ENCODE measurements at regions of chr20 and their contacts with region 1.

Region 1: GRCh38 chr20:57596998-57597939 is 23.0 kb downstream of the ZBP1 start:
- DNase-seq: peak; percentile 84
- ATAC-seq: peak; percentile 70
- H3K4me3 Mint-ChIP-seq: no peak overlapping the region
- H3K27ac Mint-ChIP-seq: no peak overlapping the region
- H3K4me1 Mint-ChIP-seq: peaks cover 2% of the 10 kb centered on the region
- H3K27me3 Mint-ChIP-seq: peaks cover 3% of the 10 kb centered on the region

Region 2: GRCh38 chr20:57089691-57090150 is 507.5 kb before region 1 on chr20:
- CTCF ChIA-PET with region 1: no interaction called
- POLR2A ChIA-PET with region 1: no interaction called
- intact Hi-C with region 1: loop called in 1 of 2 experiments (anchors 2 kb)
- DNase-seq: peak; percentile 87
- ATAC-seq: peak; percentile 80
- H3K4me3 Mint-ChIP-seq: no peak overlapping the region
- H3K27ac Mint-ChIP-seq: no peak overlapping the region
- H3K4me1 Mint-ChIP-seq: peaks cover 15% of the 10 kb centered on the region
- H3K27me3 Mint-ChIP-seq: peaks cover 9% of the 10 kb centered on the region

Region 3: GRCh38 chr20:57498425-57499400 is 98.6 kb before region 1 on chr20:
- CTCF ChIA-PET with region 1: interaction called, 7 read pairs
- POLR2A ChIA-PET with region 1: no interaction called
- intact Hi-C with region 1: loop called (anchors 1 to 2 kb)
- DNase-seq: peak; percentile 75
- ATAC-seq: peak; percentile 95
- H3K4me3 Mint-ChIP-seq: no peak overlapping the region
- H3K27ac Mint-ChIP-seq: no peak overlapping the region
- H3K4me1 Mint-ChIP-seq: peaks cover 12% of the 10 kb centered on the region
- H3K27me3 Mint-ChIP-seq: peaks cover 31% of the 10 kb centered on the region

Region 4: DNA sequence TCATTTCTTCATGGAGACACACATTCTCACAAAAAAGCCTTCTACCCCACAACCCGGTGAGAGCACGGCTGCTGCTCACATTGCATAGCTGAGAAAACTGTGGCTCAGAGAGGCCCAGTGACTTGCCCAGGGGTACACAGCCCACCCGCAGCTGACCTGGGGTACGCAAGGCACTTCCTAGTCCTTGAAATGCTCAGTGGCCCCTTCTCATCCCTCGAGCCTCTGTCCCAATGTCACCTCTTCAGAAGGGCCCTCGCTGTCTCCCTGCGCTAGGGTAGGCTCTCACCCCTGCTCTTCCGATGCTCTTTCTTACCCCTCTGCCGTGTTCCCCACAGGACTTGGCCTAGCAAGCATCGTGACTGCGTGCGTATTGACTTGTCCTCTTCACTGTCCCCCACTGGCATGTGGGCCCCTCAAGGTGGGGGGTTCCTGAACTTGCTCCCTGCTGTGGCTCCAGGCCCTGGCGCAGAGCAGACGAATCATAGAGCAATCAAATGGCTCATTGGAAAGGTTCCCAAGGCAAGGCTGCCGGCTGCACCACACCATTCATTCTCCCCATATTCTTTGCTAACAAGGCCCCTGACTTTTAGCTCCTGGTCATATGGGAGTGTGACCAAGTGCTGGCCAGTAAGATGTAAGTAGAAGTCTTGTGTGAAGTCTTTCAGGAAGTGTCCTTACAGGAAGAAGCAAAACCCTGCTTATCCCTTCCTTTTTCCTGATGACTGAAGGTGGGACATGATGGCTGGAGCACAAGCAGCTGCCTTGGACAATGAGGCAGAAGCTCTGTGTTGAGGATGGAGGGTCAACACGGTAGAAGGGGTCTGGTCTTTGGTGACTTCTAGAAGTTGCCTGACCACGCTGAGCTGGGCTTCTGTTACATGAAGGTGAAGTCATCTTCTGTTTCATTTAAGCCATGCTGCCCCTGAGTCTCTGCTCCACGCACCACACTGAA is 13.7 kb before region 1 on chr20:
- CTCF ChIA-PET with region 1: interaction called, 14 read pairs
- POLR2A ChIA-PET with region 1: no interaction called
- intact Hi-C with region 1: no loop called
- DNase-seq: no peak
- ATAC-seq: no peak
- H3K4me3 Mint-ChIP-seq: no peak overlapping the region
- H3K27ac Mint-ChIP-seq: no peak overlapping the region
- H3K4me1 Mint-ChIP-seq: no peaks in the 10 kb centered on the region
- H3K27me3 Mint-ChIP-seq: peaks cover 49% of the 10 kb centered on the region

Region 5: GRCh38 chr20:57654363-57654997 is 57.2 kb after region 1 on chr20:
- CTCF ChIA-PET with region 1: interaction called, 9 read pairs
- POLR2A ChIA-PET with region 1: no interaction called
- intact Hi-C with region 1: loop called (anchors 1 kb)
- DNase-seq: peak; percentile 75
- ATAC-seq: peak; percentile 81
- H3K4me3 Mint-ChIP-seq: no peak overlapping the region
- H3K27ac Mint-ChIP-seq: no peak overlapping the region
- H3K4me1 Mint-ChIP-seq: peaks cover 20% of the 10 kb centered on the region
- H3K27me3 Mint-ChIP-seq: no peaks in the 10 kb centered on the region

Region 6: DNA sequence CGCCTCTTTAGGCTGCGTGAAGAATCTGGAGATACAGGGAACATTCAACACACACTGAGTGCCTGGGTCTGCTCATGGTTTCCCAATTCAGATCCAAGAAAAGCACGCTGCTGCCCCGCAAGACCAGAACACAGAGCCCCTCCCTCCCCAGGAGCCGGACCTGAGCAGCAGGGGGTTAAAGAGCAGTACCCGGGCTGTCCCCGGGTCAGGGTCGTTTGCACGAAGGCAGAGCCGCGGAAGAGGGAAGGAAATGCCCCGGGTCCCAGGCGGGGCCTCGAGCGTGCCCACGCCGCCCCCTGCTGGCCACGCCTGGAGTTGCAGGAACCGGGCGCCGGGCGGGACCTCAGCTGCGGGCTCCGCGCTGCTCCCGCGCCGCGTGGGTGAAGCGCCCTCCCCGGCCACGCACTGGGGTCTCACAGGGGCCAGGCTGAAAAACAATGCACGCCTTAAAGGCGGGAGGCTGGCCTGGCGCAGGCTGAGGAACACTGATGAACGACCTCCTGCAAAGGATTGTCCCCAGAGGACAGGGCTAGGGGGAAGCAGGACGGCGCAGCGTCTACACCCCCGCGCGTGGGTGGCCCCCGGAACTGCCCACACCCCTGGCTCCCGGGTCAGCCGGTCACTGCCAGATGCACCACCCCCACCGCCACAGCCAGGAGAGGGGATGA is 582.3 kb after region 1 on chr20:
- CTCF ChIA-PET with region 1: interaction called, 5 read pairs
- POLR2A ChIA-PET with region 1: no interaction called
- intact Hi-C with region 1: loop called (anchors 1 kb)
- DNase-seq: peak; percentile 79
- ATAC-seq: peak; percentile 94
- H3K4me3 Mint-ChIP-seq: peak overlapping the region; percentile 18
- H3K27ac Mint-ChIP-seq: no peak overlapping the region
- H3K4me1 Mint-ChIP-seq: peaks cover 10% of the 10 kb centered on the region
- H3K27me3 Mint-ChIP-seq: peaks cover 13% of the 10 kb centered on the region

Measured in activated CD4-positive, alpha-beta T cell treated with anti-CD3 and anti-CD28 coated beads for 36 hours (primary cell).